ENCODE measurements at regions of chr3 and their contacts with region 1.

Region 1: GRCh38 chr3:51670823-51671733 is at the start of gene TEX264:
- DNase-seq: peak; percentile 89 to 91
- H3K4me3 ChIP-seq: peak within 1 kb of the TSS; percentile 84 to 94 (median 84)
- H3K27ac ChIP-seq: peak within 1 kb of the TSS; percentile 92 to 94 (median 93)
- H3K4me1 ChIP-seq: peaks cover 14 to 56% of the 10 kb centered on the region in 2 donors
- H3K27me3 ChIP-seq: no peaks in the 10 kb centered on the region
- CTCF ChIP-seq: no peak
- POLR2A ChIP-seq: peak in 1 of 2 donors; percentile 88
- total RNA-seq, gene TEX264: 74.3 to 135 (median 122) TPM

Region 2: GRCh38 chr3:51391075-51391567 is 280.0 kb before region 1 on chr3 and contains the start of gene RBM15B:
- intact Hi-C with region 1: loop called (anchors 5 kb)
- DNase-seq: peak; percentile 98 to 99
- H3K4me3 ChIP-seq: peak within 1 kb of the TSS; percentile 32 to 71 (median 51)
- H3K27ac ChIP-seq: peak within 1 kb of the TSS; percentile 49 to 68 (median 61)
- H3K4me1 ChIP-seq: peaks cover 48 to 75% of the 10 kb centered on the region in 2 donors
- H3K27me3 ChIP-seq: no peaks in the 10 kb centered on the region
- CTCF ChIP-seq: peak in 5 of 6 experiments; percentile 77 to 96 (median 93)
- POLR2A ChIP-seq: peak in 1 of 2 donors; percentile 72
- total RNA-seq, gene RBM15B: 29.4 to 50.0 (median 38.9) TPM

Region 3: GRCh38 chr3:51799879-51800749 is 129.0 kb after region 1 on chr3:
- intact Hi-C with region 1: no loop called
- DNase-seq: no peak
- H3K4me3 ChIP-seq: no peak overlapping the region
- H3K27ac ChIP-seq: no peak overlapping the region
- H3K4me1 ChIP-seq: no peaks in the 10 kb centered on the region
- H3K27me3 ChIP-seq: no peaks in the 10 kb centered on the region
- CTCF ChIP-seq: peak; percentile 44 to 78 (median 72)
- POLR2A ChIP-seq: no peak

Region 4: GRCh38 chr3:51845129-51845528 is 174.1 kb after region 1 on chr3:
- intact Hi-C with region 1: no loop called
- DNase-seq: no peak
- H3K4me3 ChIP-seq: no peak overlapping the region
- H3K27ac ChIP-seq: no peak overlapping the region
- H3K4me1 ChIP-seq: no peaks in the 10 kb centered on the region
- H3K27me3 ChIP-seq: no peaks in the 10 kb centered on the region
- CTCF ChIP-seq: no peak
- POLR2A ChIP-seq: no peak